ENCODE measurements at regions of chr6 and their contacts with region 1.

Region 1: GRCh38 chr6:797479-798077 is 104.6 kb upstream of the EXOC2 start:
- DNase-seq: no peak
- ATAC-seq: peak; percentile 63

Region 2: DNA sequence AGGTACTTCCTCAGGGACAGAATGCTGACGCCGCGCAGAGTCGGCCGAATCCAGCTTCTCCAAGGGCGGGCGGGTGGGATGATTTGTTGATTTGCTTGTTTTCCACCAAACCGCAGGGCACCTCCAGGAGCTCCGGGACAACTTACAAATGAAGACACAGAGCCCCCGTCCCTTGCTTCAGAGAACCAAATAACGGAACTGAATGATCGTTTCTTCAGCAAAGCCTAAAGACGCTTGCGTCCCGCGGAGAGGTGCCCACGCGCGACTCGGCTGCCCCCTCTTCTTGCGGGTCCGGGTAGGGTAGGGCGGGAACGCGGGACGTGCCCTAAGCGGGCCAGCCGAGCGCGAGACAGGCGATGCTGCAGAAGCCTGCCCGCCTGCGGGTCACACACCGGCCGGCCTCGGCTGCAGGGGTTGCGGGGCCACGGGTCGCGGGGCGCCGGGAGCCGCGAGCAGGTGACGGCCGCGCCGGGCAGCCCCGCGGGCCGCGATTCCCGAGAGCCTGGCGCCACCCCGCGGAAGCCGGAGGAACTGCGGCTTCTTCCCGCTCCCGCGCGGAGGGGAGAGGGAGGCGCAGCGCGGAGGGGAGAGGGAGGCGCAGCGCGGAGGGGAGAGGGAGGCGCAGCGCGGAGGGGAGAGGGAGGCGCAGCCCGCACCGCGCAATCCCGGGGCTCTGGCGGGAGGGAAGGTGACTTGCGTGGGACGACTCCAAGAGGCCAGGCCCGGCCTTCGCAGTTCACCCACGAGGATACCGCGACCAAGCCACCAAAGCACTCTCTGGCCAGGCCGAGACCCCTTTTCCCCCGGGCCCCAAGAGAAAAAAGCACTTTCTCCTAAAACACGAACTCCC is 584.1 kb after region 1 on chr6:
- intact Hi-C with region 1: loop called (anchors 5 kb)
- DNase-seq: no peak
- ATAC-seq: peak; percentile 96